GM10248 (cell line): ENCODE measurements at regions of chr7 and their contacts with region 1.

Region 1: GRCh38 chr7:25989140-25989705 is 162.8 kb upstream of the NFE2L3 start:
- DNase-seq: no peak
- CTCF ChIP-seq: no peak

Region 2: GRCh38 chr7:25735674-25736242 is 253.5 kb before region 1 on chr7:
- CTCF ChIA-PET with region 1: no interaction called
- POLR2A ChIA-PET with region 1: no interaction called
- DNase-seq: no peak
- CTCF ChIP-seq: no peak

Region 3: DNA sequence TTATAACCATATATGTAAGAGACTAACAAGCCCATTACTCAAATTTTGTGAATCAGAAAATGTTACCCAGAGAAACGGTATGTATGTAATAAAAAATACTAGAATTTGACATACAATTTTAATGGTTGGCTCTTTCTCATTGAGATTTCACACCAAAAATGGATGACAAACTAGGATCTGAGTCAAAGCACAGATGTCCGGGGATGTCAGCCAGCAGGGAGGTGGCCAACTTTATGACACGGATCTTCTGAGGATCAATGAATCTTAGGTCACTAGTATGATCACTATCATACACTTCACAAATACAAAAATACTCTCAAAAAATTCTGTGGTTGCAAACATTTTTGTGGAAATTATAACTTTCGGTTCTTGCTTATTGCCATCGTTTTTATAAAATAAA is 10.8 kb before region 1 on chr7:
- CTCF ChIA-PET with region 1: interaction called, 10 read pairs
- POLR2A ChIA-PET with region 1: no interaction called
- DNase-seq: no peak
- CTCF ChIP-seq: no peak